ENCODE measurements at regions of chr1 and their contacts with region 1.

Region 1: GRCh38 chr1:161989108-161989507 is 34.6 kb downstream of the OLFML2B start:
- DNase-seq: no peak

Region 2: DNA sequence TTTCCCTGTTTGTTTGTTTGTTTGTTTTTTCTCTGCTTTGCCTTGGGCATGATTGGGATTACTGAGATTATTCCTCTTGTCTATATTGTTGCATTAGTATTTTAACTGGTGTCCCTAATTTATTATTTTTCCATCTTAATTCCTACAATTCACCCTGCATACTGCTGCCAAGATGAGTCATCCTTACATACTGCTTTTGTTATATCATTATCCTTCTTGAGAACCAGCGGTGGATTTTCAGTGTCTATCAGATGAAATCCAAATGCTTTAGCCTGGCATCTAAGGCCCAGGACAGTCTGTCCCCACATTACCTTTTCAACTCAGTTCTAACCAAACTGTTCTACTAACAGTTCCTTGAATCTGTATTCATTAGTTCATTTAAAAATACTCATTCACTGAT is 67.1 kb before region 1 on chr1:
- intact Hi-C with region 1: loop called (anchors 10 kb)
- DNase-seq: no peak

Measured in posterior cingulate gyrus (tissue), 11 donors.